Activated CD4-positive, alpha-beta T cell treated with anti-CD3 and anti-CD28 coated beads, Interleukin-2, amount 10 ng/mL, durations not matched to agents 24 days and 14 days (primary cell): ENCODE measurements at regions of chr9 and their contacts with region 1.

Region 1: GRCh38 chr9:129495534-129496325 is 125.2 kb downstream of the C9orf50 start:
- DNase-seq: peak; percentile 95
- H3K4me3 Mint-ChIP-seq: peak overlapping the region; percentile 82
- H3K27ac Mint-ChIP-seq: peak overlapping the region; percentile 83
- H3K4me1 Mint-ChIP-seq: peaks cover 41% of the 10 kb centered on the region
- H3K27me3 Mint-ChIP-seq: no peaks in the 10 kb centered on the region

Region 2: DNA sequence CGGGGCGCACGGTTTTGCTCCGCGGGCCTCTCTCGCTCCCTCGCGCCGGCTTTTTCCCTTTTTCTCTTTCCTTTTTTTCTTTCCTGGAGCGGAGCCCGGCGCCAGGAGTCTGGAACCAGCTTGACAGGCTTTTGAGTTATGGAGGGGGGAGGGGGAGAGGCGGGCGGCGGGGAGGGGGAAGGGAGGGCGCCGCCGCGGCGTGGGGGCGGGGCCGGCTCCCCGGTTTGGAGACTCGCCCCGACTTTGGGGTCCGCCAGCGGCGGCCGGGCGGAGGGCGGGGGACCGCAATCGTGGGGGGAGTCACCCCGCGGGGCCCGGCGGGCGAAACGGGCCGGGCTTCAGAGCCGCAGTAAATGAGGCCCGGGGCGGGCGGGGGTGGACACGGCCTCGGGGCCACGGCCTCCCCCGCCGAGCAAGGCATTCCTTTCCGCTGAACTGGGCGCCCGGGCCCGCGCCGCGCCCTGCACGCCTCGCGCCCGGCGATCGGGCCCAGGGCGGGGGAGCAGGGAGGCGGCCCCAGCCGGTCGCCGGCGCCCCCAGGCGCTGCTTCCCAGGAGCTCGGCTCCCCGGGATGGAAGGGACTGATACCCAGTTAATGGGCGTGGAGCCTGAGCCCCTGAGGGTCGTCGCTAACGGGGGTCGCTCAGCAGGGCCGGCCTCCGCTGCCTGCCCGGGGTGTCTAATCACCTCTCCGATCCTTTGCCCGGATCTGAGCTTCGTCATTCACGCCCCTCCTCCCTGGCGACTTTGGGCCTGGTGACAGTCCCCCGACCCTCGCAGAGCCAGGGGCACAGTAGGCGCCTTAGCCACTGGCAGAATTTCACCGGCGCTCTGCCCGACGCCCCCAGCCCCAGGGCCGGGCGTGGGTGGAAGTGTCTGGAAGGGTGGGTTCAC is 13.0 kb before region 1 on chr9:
- intact Hi-C with region 1: loop called (anchors 2 kb)
- DNase-seq: peak; percentile 81
- H3K4me3 Mint-ChIP-seq: peak overlapping the region; percentile 74
- H3K27ac Mint-ChIP-seq: peak overlapping the region; percentile 76
- H3K4me1 Mint-ChIP-seq: peaks cover 38% of the 10 kb centered on the region
- H3K27me3 Mint-ChIP-seq: no peaks in the 10 kb centered on the region

Region 3: DNA sequence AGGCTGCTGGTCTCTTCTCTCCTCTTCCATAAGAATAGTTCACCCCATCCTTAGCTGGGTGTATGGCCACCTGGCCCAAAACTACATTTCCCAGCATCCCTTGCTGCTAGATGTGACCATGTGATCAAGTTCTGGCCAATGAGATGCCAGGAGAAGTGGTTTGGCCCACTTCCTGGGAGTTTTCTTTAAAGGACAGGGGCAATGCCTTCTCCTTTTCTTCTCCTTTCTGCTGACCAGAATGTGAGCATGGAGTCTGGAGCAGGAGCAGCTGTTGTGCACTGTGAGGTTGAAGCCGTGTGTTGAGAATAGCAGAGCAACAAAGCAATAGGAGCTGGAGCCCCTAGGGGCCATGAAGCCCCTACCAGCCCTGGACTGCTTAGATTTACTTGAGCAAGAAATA is 88.4 kb after region 1 on chr9:
- intact Hi-C with region 1: loop called (anchors 5 kb)
- DNase-seq: peak; percentile 92
- H3K4me3 Mint-ChIP-seq: peak overlapping the region; percentile 24
- H3K27ac Mint-ChIP-seq: peak overlapping the region; percentile 89
- H3K4me1 Mint-ChIP-seq: peaks cover 80% of the 10 kb centered on the region
- H3K27me3 Mint-ChIP-seq: peaks cover 5% of the 10 kb centered on the region

Region 4: DNA sequence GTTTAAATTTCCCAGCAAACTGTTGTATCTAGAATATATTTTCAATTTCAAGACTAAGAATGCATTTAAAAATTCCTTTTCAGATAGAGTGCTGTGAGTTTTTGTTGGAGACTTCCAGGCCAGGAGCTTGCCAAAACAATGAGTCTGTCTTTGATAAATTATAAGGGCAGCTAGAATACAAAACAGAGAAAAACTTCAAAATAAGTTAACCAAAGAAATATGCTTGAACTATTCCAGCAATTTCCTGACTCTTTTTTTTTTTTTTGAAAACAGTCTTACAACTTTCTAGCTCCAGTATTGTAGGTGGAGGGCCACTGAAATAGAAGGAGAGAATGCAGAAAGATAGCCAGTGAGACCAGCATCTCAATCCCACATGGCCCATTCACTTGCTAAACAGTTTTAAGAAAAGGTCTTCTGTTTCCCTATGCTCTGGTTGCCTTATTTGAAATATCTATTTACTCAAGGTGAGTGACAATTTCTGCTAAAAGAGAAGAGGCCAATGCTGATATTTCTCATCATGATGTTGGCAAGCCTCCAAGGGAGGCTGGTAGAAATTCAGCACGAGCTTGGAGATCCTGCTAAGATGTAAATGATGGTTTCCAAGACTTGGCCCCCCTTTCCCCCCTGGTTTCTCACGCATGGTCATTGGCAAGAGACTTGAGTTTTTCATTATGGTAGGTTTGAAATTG is 442.7 kb after region 1 on chr9:
- intact Hi-C with region 1: no loop called
- DNase-seq: no peak
- H3K4me3 Mint-ChIP-seq: no peak overlapping the region
- H3K27ac Mint-ChIP-seq: peak overlapping the region; percentile 61
- H3K4me1 Mint-ChIP-seq: peaks cover 40% of the 10 kb centered on the region
- H3K27me3 Mint-ChIP-seq: no peaks in the 10 kb centered on the region